Activated naive CD4-positive, alpha-beta T cell treated with anti-CD3 and anti-CD28 coated beads for 36 hours (primary cell): ENCODE measurements at regions of chr18 and their contacts with region 1.

Region 1: DNA sequence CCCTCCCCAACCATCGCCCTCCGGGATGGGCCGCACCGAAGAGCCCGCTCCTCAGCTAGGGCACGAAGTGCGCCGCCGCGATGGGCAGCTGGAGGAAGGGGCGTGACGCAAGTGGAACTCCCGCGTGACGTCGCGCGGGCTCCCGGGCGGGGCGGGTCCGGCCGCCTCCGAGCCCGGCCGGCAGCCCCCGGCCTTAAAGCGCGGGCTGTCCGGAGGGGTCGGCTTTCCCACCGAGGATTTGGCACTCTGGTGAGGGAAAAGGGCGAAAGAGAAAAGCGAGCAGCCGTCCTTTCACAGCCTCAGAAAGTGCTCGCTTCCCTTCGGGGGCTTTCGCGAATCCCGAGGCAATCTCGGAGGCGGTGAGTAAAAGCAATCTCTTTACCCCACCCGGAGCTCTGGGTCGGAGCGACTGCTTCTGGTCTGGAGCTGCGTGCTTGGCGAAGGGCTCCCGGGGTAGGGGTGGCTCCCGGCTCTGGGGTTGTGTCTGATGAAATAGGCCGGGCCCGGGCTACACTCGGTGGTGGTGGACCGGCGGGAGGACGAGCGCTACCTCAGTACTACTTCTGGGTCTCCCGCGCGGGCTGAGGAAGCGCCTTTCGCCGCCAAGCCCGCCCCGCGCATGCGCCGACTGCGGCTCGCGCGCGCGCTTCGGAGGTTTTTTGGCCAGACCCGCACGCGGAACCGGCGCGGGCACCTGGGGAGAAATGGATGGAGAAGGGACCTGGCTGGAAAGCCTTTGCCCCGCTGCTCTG is at the start of gene RBBP8:
- DNase-seq: peak; percentile 77
- H3K4me3 Mint-ChIP-seq: peak within 1 kb of the TSS; percentile 85
- H3K27ac Mint-ChIP-seq: peak within 1 kb of the TSS; percentile 93
- H3K4me1 Mint-ChIP-seq: peaks cover 14% of the 10 kb centered on the region
- H3K27me3 Mint-ChIP-seq: no peaks in the 10 kb centered on the region
- total RNA-seq, gene RBBP8: 77.7 to 83.7 TPM

Region 2: GRCh38 chr18:22800551-22800951 is 132.8 kb before region 1 on chr18:
- CTCF ChIA-PET with region 1: interaction called, 4 read pairs
- intact Hi-C with region 1: loop called (anchors 1 kb)
- DNase-seq: no peak
- H3K4me3 Mint-ChIP-seq: no peak overlapping the region
- H3K27ac Mint-ChIP-seq: no peak overlapping the region
- H3K4me1 Mint-ChIP-seq: no peaks in the 10 kb centered on the region
- H3K27me3 Mint-ChIP-seq: no peaks in the 10 kb centered on the region

Region 3: GRCh38 chr18:22914633-22915032 is 18.7 kb before region 1 on chr18:
- CTCF ChIA-PET with region 1: interaction called, 10 read pairs
- intact Hi-C with region 1: no loop called
- DNase-seq: no peak
- H3K4me3 Mint-ChIP-seq: no peak overlapping the region
- H3K27ac Mint-ChIP-seq: no peak overlapping the region
- H3K4me1 Mint-ChIP-seq: no peaks in the 10 kb centered on the region
- H3K27me3 Mint-ChIP-seq: peaks cover 10% of the 10 kb centered on the region

Region 4: DNA sequence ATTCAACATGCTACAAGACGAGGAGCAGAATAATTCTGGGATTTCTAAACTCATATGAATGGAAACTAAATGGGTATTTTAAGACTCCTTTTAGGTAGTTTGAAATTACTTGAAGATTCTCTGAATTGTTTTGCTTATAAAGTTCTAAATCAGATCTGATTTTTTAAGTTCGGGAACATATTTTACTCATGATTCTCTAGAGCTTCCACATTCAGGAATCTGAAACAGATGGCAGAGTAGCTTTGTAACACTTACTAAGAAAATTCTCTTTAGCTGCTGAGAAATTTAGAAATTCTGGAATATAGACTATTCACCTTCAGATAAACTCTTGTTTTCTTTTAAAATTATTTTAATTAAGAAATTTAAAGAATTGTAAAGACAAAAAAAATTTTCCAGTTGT is 13.5 kb after region 1 on chr18:
- CTCF ChIA-PET with region 1: no interaction called
- intact Hi-C with region 1: no loop called
- DNase-seq: no peak
- H3K4me3 Mint-ChIP-seq: no peak overlapping the region
- H3K27ac Mint-ChIP-seq: no peak overlapping the region
- H3K4me1 Mint-ChIP-seq: no peaks in the 10 kb centered on the region
- H3K27me3 Mint-ChIP-seq: no peaks in the 10 kb centered on the region

Region 5: GRCh38 chr18:23071285-23071684 is 137.9 kb after region 1 on chr18:
- CTCF ChIA-PET with region 1: interaction called, 3 read pairs
- intact Hi-C with region 1: loop called (anchors 2 kb)
- DNase-seq: peak; percentile 90
- H3K4me3 Mint-ChIP-seq: peak overlapping the region; percentile 20
- H3K27ac Mint-ChIP-seq: peak overlapping the region; percentile 67
- H3K4me1 Mint-ChIP-seq: peaks cover 56% of the 10 kb centered on the region
- H3K27me3 Mint-ChIP-seq: no peaks in the 10 kb centered on the region

Region 6: DNA sequence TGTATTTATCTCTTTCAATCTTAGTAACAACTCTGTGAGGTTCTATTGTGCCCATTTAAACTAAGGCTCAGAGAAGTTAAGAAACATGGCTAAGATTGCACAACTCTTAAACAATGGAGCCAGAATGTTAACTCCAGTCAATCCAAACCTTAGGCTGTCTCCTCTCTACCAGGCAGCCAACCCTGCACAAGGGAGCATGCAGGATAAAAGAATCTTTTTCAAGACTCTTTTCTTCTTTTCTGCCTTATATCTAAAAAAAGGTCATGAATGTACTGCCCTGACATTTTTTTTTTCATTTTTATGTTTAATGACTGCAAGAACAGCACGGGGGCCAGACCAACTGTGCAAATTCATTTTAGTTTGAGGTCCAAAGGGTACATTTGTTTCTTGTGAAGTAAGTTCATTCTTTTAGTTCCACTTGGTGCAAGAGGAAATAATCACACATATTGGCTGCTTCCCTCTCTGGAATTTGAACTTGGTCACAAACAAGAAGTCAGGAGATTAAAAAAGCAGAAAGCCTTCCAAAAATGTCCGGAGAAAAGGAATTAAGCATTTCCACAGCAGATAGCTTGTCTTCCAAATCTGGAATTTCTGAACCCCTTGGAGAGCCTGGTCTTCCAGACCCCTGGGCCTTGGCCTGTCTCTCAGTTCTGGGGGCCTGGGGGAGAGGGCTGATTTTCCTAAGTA is 423.7 kb after region 1 on chr18:
- CTCF ChIA-PET with region 1: no interaction called
- intact Hi-C with region 1: loop called (anchors 1 kb)
- DNase-seq: no peak
- H3K4me3 Mint-ChIP-seq: no peak overlapping the region
- H3K27ac Mint-ChIP-seq: no peak overlapping the region
- H3K4me1 Mint-ChIP-seq: peaks cover 14% of the 10 kb centered on the region
- H3K27me3 Mint-ChIP-seq: no peaks in the 10 kb centered on the region

Region 7: GRCh38 chr18:23452728-23453679 is 519.6 kb after region 1 on chr18 and contains the start of gene RIOK3:
- CTCF ChIA-PET with region 1: interaction called, 3 read pairs
- intact Hi-C with region 1: loop called (anchors 1 kb)
- DNase-seq: peak; percentile 94
- H3K4me3 Mint-ChIP-seq: peak within 1 kb of the TSS; percentile 99
- H3K27ac Mint-ChIP-seq: peak within 1 kb of the TSS; percentile 91
- H3K4me1 Mint-ChIP-seq: peaks cover 42% of the 10 kb centered on the region
- H3K27me3 Mint-ChIP-seq: no peaks in the 10 kb centered on the region
- total RNA-seq, gene RIOK3: 53.8 to 59.5 TPM